Activated CD8-positive, alpha-beta T cell treated with anti-CD3 and anti-CD28 coated beads, Interleukin-2, amount 10 ng/mL, durations not matched to agents 7 days and 5 days (primary cell): ENCODE measurements at regions of chr10 and their contacts with region 1.

Region 1: GRCh38 chr10:114499630-114500190 is 95.4 kb upstream of the AFAP1L2 start:
- DNase-seq: peak; percentile 64
- ATAC-seq: peak; percentile 66
- H3K4me3 Mint-ChIP-seq: peak overlapping the region; percentile 56
- H3K27ac Mint-ChIP-seq: peak overlapping the region; percentile 89
- H3K4me1 Mint-ChIP-seq: peaks cover 80% of the 10 kb centered on the region
- H3K27me3 Mint-ChIP-seq: no peaks in the 10 kb centered on the region

Region 2: DNA sequence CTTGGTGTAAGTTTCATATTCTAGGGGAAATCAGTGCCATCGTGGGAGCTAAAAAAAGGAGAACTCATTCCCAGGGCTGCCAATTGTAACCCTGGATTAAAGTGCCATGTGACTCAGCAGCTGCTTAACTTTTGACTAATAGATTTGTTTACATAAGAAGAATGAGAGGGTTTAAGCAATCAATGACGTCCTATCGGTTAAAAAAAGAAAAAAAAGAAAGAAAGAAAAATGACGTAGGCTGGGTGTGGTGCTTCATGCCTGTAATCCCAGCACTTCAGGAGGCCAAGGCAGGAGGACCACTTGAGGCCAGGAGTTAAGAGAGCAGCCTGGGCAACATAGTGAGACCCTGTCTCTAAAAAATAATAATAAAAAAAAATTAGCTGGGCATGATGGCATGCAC is 20.7 kb after region 1 on chr10:
- CTCF ChIA-PET with region 1: interaction called, 149 read pairs
- POLR2A ChIA-PET with region 1: interaction called, 17 read pairs
- DNase-seq: no peak
- ATAC-seq: no peak
- H3K4me3 Mint-ChIP-seq: peak overlapping the region; percentile 34
- H3K27ac Mint-ChIP-seq: peak overlapping the region; percentile 66
- H3K4me1 Mint-ChIP-seq: peaks cover 96% of the 10 kb centered on the region
- H3K27me3 Mint-ChIP-seq: no peaks in the 10 kb centered on the region